ENCODE measurements at regions of chr6 and their contacts with region 1.

Region 1: GRCh38 chr6:166999145-166999883 is at the start of gene CEP43:
- DNase-seq: peak; percentile 98
- ATAC-seq: peak; percentile 93
- H3K4me3 ChIP-seq: peak within 1 kb of the TSS; percentile 95
- H3K27ac ChIP-seq: peak within 1 kb of the TSS; percentile 87
- H3K4me1 ChIP-seq: peaks cover 20 to 30% of the 10 kb centered on the region in 2 experiments; a peak in 4 of 5 replicates
- H3K27me3 ChIP-seq: no peaks in the 10 kb centered on the region
- CTCF ChIP-seq: no peak
- EP300 ChIP-seq: peak; percentile 70
- POLR2A ChIP-seq: peak; percentile 84
- RAD21 ChIP-seq: no peak
- polyA plus RNA-seq, gene CEP43: 15.2 to 19.3 TPM

Region 2: GRCh38 chr6:166910601-166911000 is 88.7 kb before region 1 on chr6:
- CTCF ChIA-PET with region 1: no interaction called
- POLR2A ChIA-PET with region 1: no interaction called
- in situ Hi-C with region 1: no loop called
- intact Hi-C with region 1: no loop called
- DNase-seq: peak in 1 of 4 experiments; percentile 34
- ATAC-seq: no peak
- H3K4me3 ChIP-seq: no peak overlapping the region
- H3K27ac ChIP-seq: peak overlapping the region; percentile 60; the same call in 2 of the 3 replicates
- H3K4me1 ChIP-seq: peaks cover 3 to 16% of the 10 kb centered on the region in 2 experiments; a peak in 4 of 5 replicates
- H3K27me3 ChIP-seq: peaks cover 0 to 28% of the 10 kb centered on the region in 2 experiments; a peak in 2 of 5 replicates
- CTCF ChIP-seq: no peak
- EP300 ChIP-seq: no peak
- POLR2A ChIP-seq: no peak
- RAD21 ChIP-seq: no peak

Region 3: GRCh38 chr6:166956444-166957086 is 42.7 kb before region 1 on chr6 and contains the start of gene RNASET2:
- CTCF ChIA-PET with region 1: no interaction called
- POLR2A ChIA-PET with region 1: interaction called, 3 read pairs
- in situ Hi-C with region 1: no loop called
- intact Hi-C with region 1: loop called (anchors 2 kb)
- DNase-seq: peak; percentile 96 to 99 (median 97)
- ATAC-seq: peak; percentile 97
- H3K4me3 ChIP-seq: peak within 1 kb of the TSS; percentile 75
- H3K27ac ChIP-seq: peak within 1 kb of the TSS; percentile 73
- H3K4me1 ChIP-seq: peaks cover 27 to 41% of the 10 kb centered on the region in 2 experiments
- H3K27me3 ChIP-seq: no peaks in the 10 kb centered on the region
- CTCF ChIP-seq: 0 out of 6 replicates have a peak, but pooled peaks of 1 of the 3 experiments have one; percentile 4
- EP300 ChIP-seq: no peak
- POLR2A ChIP-seq: peak; percentile 63
- RAD21 ChIP-seq: no peak
- polyA plus RNA-seq, gene RNASET2: 7.4 to 15.8 TPM

Region 4: DNA sequence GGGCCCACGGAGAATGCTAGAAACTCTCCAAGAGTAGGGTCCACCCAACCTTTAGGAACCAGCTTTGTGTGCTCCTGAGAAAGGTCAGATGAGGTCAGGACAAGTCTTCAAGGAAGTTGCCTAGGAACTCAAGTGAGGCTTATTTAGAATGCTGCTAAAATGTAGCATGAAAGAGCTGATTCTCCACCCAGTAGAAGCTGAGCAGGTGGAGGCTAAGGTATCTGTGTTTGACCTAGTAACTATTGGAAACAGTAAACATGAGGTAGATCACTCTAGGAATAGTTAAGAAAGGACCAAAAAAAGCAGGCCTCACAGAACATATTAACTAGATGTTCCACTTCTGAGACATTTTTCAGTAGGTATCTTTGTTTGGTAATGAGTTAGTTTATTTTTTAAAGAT is 13.8 kb after region 1 on chr6:
- CTCF ChIA-PET with region 1: no interaction called
- POLR2A ChIA-PET with region 1: interaction called, 10 read pairs
- in situ Hi-C with region 1: no loop called
- intact Hi-C with region 1: no loop called
- DNase-seq: no peak
- ATAC-seq: no peak
- H3K4me3 ChIP-seq: no peak overlapping the region
- H3K27ac ChIP-seq: no peak overlapping the region
- H3K4me1 ChIP-seq: no peaks in the 10 kb centered on the region
- H3K27me3 ChIP-seq: no peaks in the 10 kb centered on the region
- CTCF ChIP-seq: no peak
- EP300 ChIP-seq: no peak
- POLR2A ChIP-seq: no peak
- RAD21 ChIP-seq: no peak

Region 5: GRCh38 chr6:167047554-167047953 is 48.2 kb after region 1 on chr6:
- CTCF ChIA-PET with region 1: no interaction called
- POLR2A ChIA-PET with region 1: no interaction called
- in situ Hi-C with region 1: no loop called
- intact Hi-C with region 1: loop called (anchors 5 kb)
- DNase-seq: no peak
- ATAC-seq: no peak
- H3K4me3 ChIP-seq: no peak overlapping the region
- H3K27ac ChIP-seq: no peak overlapping the region
- H3K4me1 ChIP-seq: no peaks in the 10 kb centered on the region
- H3K27me3 ChIP-seq: no peaks in the 10 kb centered on the region
- CTCF ChIP-seq: no peak
- EP300 ChIP-seq: no peak
- POLR2A ChIP-seq: no peak
- RAD21 ChIP-seq: no peak

Region 6: GRCh38 chr6:167141667-167142432 is 142.5 kb after region 1 on chr6:
- CTCF ChIA-PET with region 1: no interaction called
- POLR2A ChIA-PET with region 1: no interaction called
- in situ Hi-C with region 1: no loop called
- intact Hi-C with region 1: loop called (anchors 5 kb)
- DNase-seq: peak; percentile 32 to 60 (median 44)
- ATAC-seq: peak; percentile 96
- H3K4me3 ChIP-seq: no peak overlapping the region
- H3K27ac ChIP-seq: no peak overlapping the region
- H3K4me1 ChIP-seq: no peaks in the 10 kb centered on the region
- H3K27me3 ChIP-seq: peaks cover 28 to 64% of the 10 kb centered on the region in 2 experiments
- CTCF ChIP-seq: peak; percentile 84 to 89 (median 85)
- EP300 ChIP-seq: no peak
- POLR2A ChIP-seq: no peak
- RAD21 ChIP-seq: peak; percentile 86 to 95